ENCODE measurements at regions of chr5 and their contacts with region 1.

Region 1: GRCh38 chr5:154179846-154180710 is 10.5 kb upstream of the GALNT10 start:
- DNase-seq: peak; percentile 66
- CTCF ChIP-seq: peak; percentile 75

Region 2: GRCh38 chr5:153964880-153965645 is 215.0 kb before region 1 on chr5:
- in situ Hi-C with region 1: no loop called
- DNase-seq: peak; percentile 82
- CTCF ChIP-seq: peak; percentile 96

Region 3: DNA sequence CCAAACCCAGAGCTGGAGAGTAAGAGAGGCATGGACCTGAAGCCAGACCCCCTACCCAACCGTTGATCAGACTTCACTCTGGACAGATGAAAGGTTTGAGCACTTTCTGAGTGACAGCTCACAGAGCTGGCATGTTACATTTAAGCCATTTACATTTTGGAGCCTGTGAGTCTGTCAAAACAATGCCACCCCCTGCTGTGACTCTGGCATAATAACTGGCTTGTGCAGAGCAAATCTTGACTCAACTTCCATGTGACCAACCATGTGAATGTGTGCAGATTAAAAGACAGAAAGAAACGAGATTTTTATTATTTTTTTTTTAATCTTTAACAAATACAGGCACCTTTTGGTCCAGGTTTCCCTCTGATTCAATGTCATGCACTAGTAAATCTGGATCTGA is 92.8 kb before region 1 on chr5:
- in situ Hi-C with region 1: loop called (anchors 10 kb)
- DNase-seq: no peak
- CTCF ChIP-seq: no peak

Measured in GM13977 (cell line).